ENCODE measurements at regions of chr10 and their contacts with region 1.

Region 1: GRCh38 chr10:117262291-117262902 is 21.5 kb downstream of the SLC18A2 start:
- DNase-seq: no peak
- H3K4me3 ChIP-seq: no peak overlapping the region
- H3K27ac ChIP-seq: no peak overlapping the region
- H3K4me1 ChIP-seq: no peaks in the 10 kb centered on the region
- H3K27me3 ChIP-seq: peaks cover 0 to 31% of the 10 kb centered on the region in 2 donors
- CTCF ChIP-seq: no peak
- POLR2A ChIP-seq: no peak

Region 2: GRCh38 chr10:117228210-117228609 is 34.2 kb before region 1 on chr10:
- intact Hi-C with region 1: loop called (anchors 1 kb)
- DNase-seq: no peak
- H3K4me3 ChIP-seq: no peak overlapping the region
- H3K27ac ChIP-seq: no peak overlapping the region
- H3K4me1 ChIP-seq: no peaks in the 10 kb centered on the region
- H3K27me3 ChIP-seq: peaks cover 0 to 19% of the 10 kb centered on the region in 2 donors
- CTCF ChIP-seq: no peak
- POLR2A ChIP-seq: no peak

Measured in breast epithelium (tissue), 4 donors.